PC-3 (cell line): ENCODE measurements at regions of chr22 and their contacts with region 1.

Region 1: GRCh38 chr22:44360686-44361381 is 48.1 kb upstream of the SHISAL1 start:
- DNase-seq: peak; percentile 94
- ATAC-seq: peak; percentile 68
- H3K4me3 ChIP-seq: peak overlapping the region; percentile 49; the same call in 1 of the 2 replicates
- H3K27ac ChIP-seq: peak overlapping the region; percentile 100
- H3K4me1 ChIP-seq: peaks cover 48% of the 10 kb centered on the region
- H3K27me3 ChIP-seq: no peaks in the 10 kb centered on the region
- CTCF ChIP-seq: 0 out of 2 replicates have a peak, but pooled peaks have one; percentile 15

Region 2: GRCh38 chr22:44211946-44212930 is 148.6 kb before region 1 on chr22:
- CTCF ChIA-PET with region 1: no interaction called
- POLR2A ChIA-PET with region 1: no interaction called
- intact Hi-C with region 1: no loop called
- DNase-seq: no peak
- ATAC-seq: no peak
- H3K4me3 ChIP-seq: no peak overlapping the region
- H3K27ac ChIP-seq: no peak overlapping the region
- H3K4me1 ChIP-seq: no peaks in the 10 kb centered on the region
- H3K27me3 ChIP-seq: peaks cover 15% of the 10 kb centered on the region
- CTCF ChIP-seq: no peak

Region 3: DNA sequence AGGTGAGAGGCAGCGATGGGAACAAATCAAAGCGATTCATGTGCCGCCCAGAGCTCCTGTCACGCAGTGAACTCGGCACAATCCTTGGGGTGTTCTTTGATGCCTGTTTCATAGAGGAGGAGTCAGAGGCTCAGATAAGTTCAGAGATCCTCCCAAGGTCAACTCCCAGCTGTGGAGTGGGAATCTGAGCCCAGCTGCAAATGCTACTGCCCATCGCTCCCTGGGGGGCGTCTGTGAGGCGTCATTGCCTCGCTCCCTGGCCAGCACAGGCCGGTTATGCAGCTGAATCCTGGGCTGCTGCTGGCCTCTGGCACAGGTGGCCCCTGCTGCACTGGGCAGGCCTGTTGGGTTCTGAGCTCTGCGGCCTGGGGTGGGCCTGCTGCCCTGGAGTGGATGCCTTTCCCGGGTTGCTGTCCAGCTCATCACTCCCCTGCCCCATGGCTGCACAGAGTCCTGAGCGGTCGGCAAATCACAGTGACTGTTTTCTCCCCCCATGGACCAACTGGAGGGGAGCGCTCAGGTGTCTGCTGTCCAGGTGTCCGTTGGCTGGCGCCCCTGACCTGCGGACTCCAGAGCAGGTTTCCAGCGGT is 11.8 kb before region 1 on chr22:
- CTCF ChIA-PET with region 1: no interaction called
- POLR2A ChIA-PET with region 1: no interaction called
- intact Hi-C with region 1: no loop called
- DNase-seq: no peak
- ATAC-seq: no peak
- H3K4me3 ChIP-seq: no peak overlapping the region
- H3K27ac ChIP-seq: no peak overlapping the region
- H3K4me1 ChIP-seq: peaks cover 12% of the 10 kb centered on the region; the same call in 1 of the 2 replicates
- H3K27me3 ChIP-seq: no peaks in the 10 kb centered on the region
- CTCF ChIP-seq: no peak

Region 4: DNA sequence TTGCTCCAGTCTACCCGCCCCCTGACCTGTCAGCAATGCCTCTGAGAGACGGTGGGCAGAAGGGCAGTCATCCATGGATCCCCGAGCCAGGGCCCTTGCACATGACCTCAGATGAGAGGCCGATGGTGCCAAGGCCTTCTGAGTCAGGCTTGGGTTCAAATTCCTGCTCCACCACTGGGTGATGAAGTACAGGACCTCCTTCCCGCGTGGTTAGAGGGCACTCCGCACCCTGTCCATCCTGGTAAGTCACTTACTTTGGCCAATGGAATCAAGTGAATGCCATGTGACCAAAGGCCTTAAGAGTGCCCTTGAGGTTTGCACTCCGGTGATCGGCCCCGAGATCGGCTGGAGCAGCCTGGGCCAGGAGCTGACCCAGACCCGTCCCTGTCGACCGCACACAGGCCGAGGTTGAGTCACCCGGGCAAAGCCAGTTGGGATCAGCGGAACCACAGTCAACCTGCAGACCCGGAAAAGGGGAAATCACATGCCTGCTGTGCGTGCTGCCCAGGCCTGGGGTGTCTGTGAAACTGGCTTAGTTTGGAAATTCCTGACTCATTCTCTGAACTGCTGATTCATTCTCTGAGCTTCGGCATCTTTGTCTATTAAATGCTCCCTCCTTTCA is 88.3 kb after region 1 on chr22:
- CTCF ChIA-PET with region 1: no interaction called
- POLR2A ChIA-PET with region 1: no interaction called
- intact Hi-C with region 1: loop called (anchors 1 kb)
- DNase-seq: peak; percentile 89
- ATAC-seq: peak; percentile 66
- H3K4me3 ChIP-seq: 0 out of 2 replicates have a peak overlapping the region, but pooled peaks have one; percentile 14
- H3K27ac ChIP-seq: peak overlapping the region; percentile 99
- H3K4me1 ChIP-seq: peaks cover 39% of the 10 kb centered on the region
- H3K27me3 ChIP-seq: no peaks in the 10 kb centered on the region
- CTCF ChIP-seq: no peak